ENCODE measurements at regions of chr5 and their contacts with region 1.

Region 1: GRCh38 chr5:32683125-32683524 is 28.0 kb upstream of the NPR3 start:
- DNase-seq: no peak
- H3K4me3 ChIP-seq: no peak overlapping the region
- H3K4me3 Mint-ChIP-seq: no peak overlapping the region
- H3K27ac Mint-ChIP-seq: no peak overlapping the region
- H3K4me1 ChIP-seq: no peaks in the 10 kb centered on the region
- H3K4me1 Mint-ChIP-seq: no peaks in the 10 kb centered on the region
- H3K27me3 ChIP-seq: no peaks in the 10 kb centered on the region
- H3K27me3 Mint-ChIP-seq: no peaks in the 10 kb centered on the region
- CTCF ChIP-seq: no peak

Region 2: GRCh38 chr5:32646061-32646969 is 36.8 kb before region 1 on chr5:
- CTCF ChIA-PET with region 1: no interaction called
- POLR2A ChIA-PET with region 1: no interaction called
- intact Hi-C with region 1: loop called (anchors 2 kb)
- DNase-seq: no peak
- H3K4me3 ChIP-seq: no peak overlapping the region
- H3K4me3 Mint-ChIP-seq: no peak overlapping the region
- H3K27ac Mint-ChIP-seq: no peak overlapping the region
- H3K4me1 ChIP-seq: peaks cover 17% of the 10 kb centered on the region
- H3K4me1 Mint-ChIP-seq: no peaks in the 10 kb centered on the region
- H3K27me3 ChIP-seq: no peaks in the 10 kb centered on the region
- H3K27me3 Mint-ChIP-seq: no peaks in the 10 kb centered on the region
- CTCF ChIP-seq: no peak